ENCODE measurements at regions of chr11 and their contacts with region 1.

Region 1: DNA sequence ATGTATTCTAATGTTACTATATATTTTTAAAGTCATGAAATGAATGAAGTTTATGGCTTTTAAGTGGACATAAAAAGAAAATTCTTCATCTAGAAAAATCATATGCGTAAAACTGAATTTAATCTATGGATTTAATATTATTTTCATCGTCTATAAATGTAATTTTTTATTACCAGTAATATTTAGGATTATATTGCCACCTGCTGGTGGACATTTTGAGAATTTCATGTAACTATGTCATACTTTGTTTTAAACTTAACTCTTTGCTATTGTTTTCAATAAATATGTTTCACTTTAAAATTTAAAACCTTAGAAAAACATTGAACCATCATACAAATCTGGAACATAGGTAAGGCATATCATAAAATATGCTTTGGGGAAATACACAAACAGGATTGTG is 66.5 kb upstream of the CEP126 start:
- DNase-seq: no peak

Region 2: GRCh38 chr11:101456812-101457211 is 391.4 kb before region 1 on chr11:
- intact Hi-C with region 1: loop called (anchors 2 kb)
- DNase-seq: no peak